ENCODE measurements at regions of chr21 and their contacts with region 1.

Region 1: GRCh38 chr21:15483138-15483780 is 246.5 kb upstream of the USP25 start:
- DNase-seq: peak; percentile 80 to 81
- ATAC-seq: peak; percentile 96 to 98
- H3K4me3 ChIP-seq: no peak overlapping the region
- H3K27ac ChIP-seq: no peak overlapping the region
- H3K4me1 ChIP-seq: peaks cover 0 to 10% of the 10 kb centered on the region in 2 donors
- H3K27me3 ChIP-seq: no peaks in the 10 kb centered on the region
- CTCF ChIP-seq: peak; percentile 83 to 95 (median 87)
- POLR2A ChIP-seq: no peak

Region 2: GRCh38 chr21:14382835-14383594 is 1100.2 kb before region 1 on chr21 and contains the start of gene HSPA13:
- in situ Hi-C with region 1: no loop called
- intact Hi-C with region 1: loop called (anchors 10 kb)
- DNase-seq: peak; percentile 99 to 100
- ATAC-seq: peak; percentile 99
- H3K4me3 ChIP-seq: peak within 1 kb of the TSS; percentile 76 to 96 (median 82)
- H3K27ac ChIP-seq: peak within 1 kb of the TSS; percentile 85 to 90 (median 86)
- H3K4me1 ChIP-seq: peaks cover 10 to 21% of the 10 kb centered on the region in 2 donors
- H3K27me3 ChIP-seq: no peaks in the 10 kb centered on the region
- CTCF ChIP-seq: no peak
- POLR2A ChIP-seq: peak; percentile 61 to 67
- total RNA-seq, gene HSPA13: 4.8 to 8.3 (median 7.4) TPM

Region 3: DNA sequence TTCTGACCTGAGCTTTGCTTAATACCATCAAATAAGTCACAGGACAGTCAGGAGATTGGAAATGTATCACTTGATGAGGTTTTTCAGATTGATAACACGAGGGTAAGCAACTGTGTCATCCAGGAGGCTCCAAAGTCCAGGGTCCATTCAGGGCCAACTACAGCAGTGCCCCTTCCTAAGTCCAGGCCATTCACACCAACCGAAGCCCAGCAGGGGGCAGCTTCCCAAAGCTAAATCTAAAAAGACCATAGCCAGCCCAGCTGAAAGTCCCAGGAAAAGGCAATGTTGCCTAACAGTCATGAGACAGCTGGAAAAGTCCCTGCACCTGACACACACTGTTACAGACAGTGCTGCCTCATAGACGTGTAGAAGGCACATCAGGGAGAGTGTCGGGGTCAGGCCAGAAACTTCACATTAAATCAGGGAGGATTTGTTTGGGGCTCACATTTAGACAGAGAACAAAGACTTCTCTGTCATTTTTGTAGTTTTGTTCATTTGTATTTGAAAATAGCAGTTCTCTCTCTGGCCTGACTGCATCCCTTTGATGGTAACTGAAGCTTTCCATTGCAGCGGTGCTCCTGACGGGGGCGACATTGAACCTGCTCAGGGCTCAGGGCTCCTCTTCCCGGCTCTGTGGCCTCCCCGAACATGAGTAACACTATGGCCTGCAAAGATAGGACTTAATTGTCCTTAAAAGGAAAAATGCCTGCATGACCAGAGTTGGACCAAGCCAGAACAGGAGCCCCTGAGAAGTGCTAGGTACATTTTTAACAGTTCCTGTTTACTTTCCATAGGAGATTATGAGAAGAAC is 618.8 kb before region 1 on chr21:
- in situ Hi-C with region 1: loop called in 2 of 4 experiments (anchors 5 kb)
- intact Hi-C with region 1: loop called (anchors 1 kb)
- DNase-seq: peak; percentile 59 to 76
- ATAC-seq: peak; percentile 97 to 98
- H3K4me3 ChIP-seq: no peak overlapping the region
- H3K27ac ChIP-seq: peak overlapping the region in 2 of 4 donors; percentile 8 to 34
- H3K4me1 ChIP-seq: peaks cover 13% of the 10 kb centered on the region in 2 donors
- H3K27me3 ChIP-seq: no peaks in the 10 kb centered on the region
- CTCF ChIP-seq: peak; percentile 41 to 74 (median 56)
- POLR2A ChIP-seq: no peak

Region 4: DNA sequence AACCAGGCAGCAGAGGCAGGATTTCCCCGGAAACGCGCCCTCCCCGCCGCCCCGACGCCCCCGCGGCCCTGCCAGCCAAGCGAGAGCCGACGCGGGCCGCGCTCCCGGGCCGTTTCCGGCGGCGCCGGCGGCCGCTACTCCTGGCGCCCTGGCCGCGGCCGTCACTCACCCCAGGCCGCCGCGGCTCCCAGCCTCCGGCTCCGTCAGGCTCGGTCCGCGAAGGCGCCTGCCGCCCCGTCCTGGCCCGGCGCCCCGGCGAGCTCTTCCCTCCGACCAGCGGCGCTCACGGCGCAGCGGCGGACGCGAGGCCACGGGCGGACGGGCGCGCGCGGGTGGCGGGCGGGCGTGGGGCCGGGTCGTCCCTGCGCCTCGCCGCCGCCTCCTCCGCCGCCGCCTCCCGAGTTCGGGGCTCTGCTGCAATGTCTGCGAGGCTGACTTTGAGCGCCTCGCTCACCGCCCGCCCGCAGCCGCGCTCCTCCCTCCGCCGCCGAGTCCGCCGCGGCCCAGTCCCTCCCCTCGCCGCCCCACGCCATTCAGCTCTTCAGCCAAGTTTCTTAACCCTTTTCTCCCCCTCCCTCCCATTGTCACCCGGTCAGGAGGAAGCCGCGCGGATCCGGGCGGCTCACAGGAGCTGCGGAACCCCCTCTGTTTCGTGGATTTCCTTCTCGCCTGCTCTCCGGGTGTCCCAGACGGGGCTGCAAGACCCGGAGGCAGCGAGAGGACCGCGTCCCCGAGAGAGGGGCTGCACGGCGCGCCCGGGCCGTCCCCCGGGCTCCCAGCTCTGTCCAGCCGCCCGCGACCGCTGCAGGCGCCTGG is 418.5 kb before region 1 on chr21 and contains the start of gene NRIP1:
- in situ Hi-C with region 1: no loop called
- intact Hi-C with region 1: loop called (anchors 2 kb)
- DNase-seq: peak; percentile 86 to 91
- ATAC-seq: peak; percentile 84 to 86
- H3K4me3 ChIP-seq: peak within 1 kb of the TSS; percentile 85 to 93 (median 90)
- H3K27ac ChIP-seq: peak within 1 kb of the TSS; percentile 95 to 99 (median 97)
- H3K4me1 ChIP-seq: peaks cover 32 to 43% of the 10 kb centered on the region in 2 donors
- H3K27me3 ChIP-seq: no peaks in the 10 kb centered on the region
- CTCF ChIP-seq: no peak
- POLR2A ChIP-seq: peak; percentile 95 to 96
- total RNA-seq, gene NRIP1: 35.7 to 63.7 (median 41.0) TPM

Region 5: GRCh38 chr21:15343066-15343465 is 140.2 kb before region 1 on chr21:
- in situ Hi-C with region 1: no loop called
- intact Hi-C with region 1: no loop called
- DNase-seq: no peak
- ATAC-seq: no peak
- H3K4me3 ChIP-seq: no peak overlapping the region
- H3K27ac ChIP-seq: no peak overlapping the region
- H3K4me1 ChIP-seq: no peaks in the 10 kb centered on the region
- H3K27me3 ChIP-seq: no peaks in the 10 kb centered on the region
- CTCF ChIP-seq: no peak
- POLR2A ChIP-seq: no peak

Region 6: DNA sequence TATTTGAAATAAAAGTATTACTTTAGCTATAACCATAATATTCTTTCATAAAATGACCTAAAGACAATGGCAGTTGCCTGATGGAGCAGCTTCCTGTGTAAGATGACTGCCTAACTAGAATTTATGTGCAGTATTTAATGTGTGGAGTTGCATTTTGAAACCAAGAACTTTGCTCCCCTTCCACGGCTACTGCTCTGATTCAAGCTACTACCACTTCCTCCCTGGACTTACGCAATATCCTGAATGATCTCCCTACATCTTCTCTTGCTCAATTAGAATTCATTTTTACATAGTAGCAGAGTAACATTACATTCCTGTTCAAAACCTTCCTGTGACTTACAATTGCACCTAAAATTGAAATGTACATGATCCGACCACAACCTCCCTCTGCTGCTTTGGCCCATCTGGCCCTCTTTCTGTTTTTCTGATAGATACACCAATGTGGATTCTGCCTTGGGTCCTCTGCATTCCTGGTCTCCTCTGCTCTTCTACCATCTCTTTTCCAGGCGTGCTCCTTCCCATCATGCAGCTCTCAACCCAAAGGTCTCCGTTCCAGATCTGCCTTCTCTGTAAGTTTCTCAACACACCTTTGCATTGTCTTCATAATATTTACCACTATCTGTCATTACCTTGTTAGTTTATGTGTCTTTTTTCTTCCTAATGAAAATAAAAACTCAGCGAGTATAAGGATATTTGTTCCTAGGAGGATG is 199.1 kb after region 1 on chr21:
- in situ Hi-C with region 1: no loop called
- intact Hi-C with region 1: no loop called
- DNase-seq: no peak
- ATAC-seq: no peak
- H3K4me3 ChIP-seq: no peak overlapping the region
- H3K27ac ChIP-seq: no peak overlapping the region
- H3K4me1 ChIP-seq: no peaks in the 10 kb centered on the region
- H3K27me3 ChIP-seq: no peaks in the 10 kb centered on the region
- CTCF ChIP-seq: no peak
- POLR2A ChIP-seq: no peak

Region 7: DNA sequence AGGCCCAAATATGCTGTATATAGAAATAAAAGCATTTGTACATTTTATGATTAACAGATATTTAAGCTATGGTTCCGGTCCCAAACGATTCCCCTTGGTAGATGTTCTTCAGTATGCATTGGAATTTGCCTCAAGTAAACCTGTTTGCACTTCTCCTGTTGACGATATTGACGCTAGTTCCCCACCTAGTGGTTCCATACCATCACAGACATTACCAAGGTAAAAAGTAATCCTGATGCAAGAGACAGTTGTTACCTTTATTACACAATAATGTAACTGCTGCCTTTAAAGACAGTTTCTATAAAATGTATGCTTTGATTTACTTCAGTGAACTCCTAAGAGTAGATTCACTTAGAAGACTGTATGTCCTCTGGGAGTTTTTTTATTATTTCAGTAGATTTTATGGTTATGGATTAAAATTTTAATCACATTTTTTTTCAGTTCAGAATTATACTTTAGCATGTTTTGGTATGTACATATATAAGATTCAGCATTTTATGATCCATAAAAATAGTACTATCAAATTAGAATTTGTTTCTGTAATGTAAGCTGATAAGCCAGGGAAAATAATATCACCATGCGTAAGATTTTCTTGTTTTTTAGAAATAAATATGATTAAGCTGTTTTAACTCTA is 343.0 kb after region 1 on chr21:
- in situ Hi-C with region 1: loop called in 1 of 4 experiments (anchors 25 kb)
- intact Hi-C with region 1: no loop called
- DNase-seq: peak; percentile 27 to 51
- ATAC-seq: peak; percentile 74 to 79
- H3K4me3 ChIP-seq: peak overlapping the region; percentile 21 to 32 (median 25)
- H3K27ac ChIP-seq: peak overlapping the region; percentile 85 to 92 (median 88)
- H3K4me1 ChIP-seq: peaks cover 24 to 30% of the 10 kb centered on the region in 2 donors
- H3K27me3 ChIP-seq: no peaks in the 10 kb centered on the region
- CTCF ChIP-seq: peak; percentile 42 to 62 (median 58)
- POLR2A ChIP-seq: no peak